ENCODE measurements at regions of chr17 and their contacts with region 1.

Region 1: GRCh38 chr17:12637015-12637414 is 28.7 kb upstream of the MYOCD start:
- DNase-seq: no peak
- ATAC-seq: peak in 3 of 4 donors; percentile 52 to 75 (median 52)
- H3K4me3 ChIP-seq: no peak overlapping the region
- H3K27ac ChIP-seq: peak overlapping the region in 3 of 12 donors; percentile 21 to 66 (median 52)
- H3K4me1 ChIP-seq: peaks cover 0 to 25% (median 2%) of the 10 kb centered on the region in 12 donors
- H3K27me3 ChIP-seq: peaks cover 0 to 5% (median 0%) of the 10 kb centered on the region in 9 donors
- CTCF ChIP-seq: no peak
- POLR2A ChIP-seq: no peak

Region 2: GRCh38 chr17:12580640-12581039 is 56.4 kb before region 1 on chr17:
- intact Hi-C with region 1: no loop called
- DNase-seq: no peak
- ATAC-seq: peak in 3 of 4 donors; percentile 43 to 59 (median 47)
- H3K4me3 ChIP-seq: peak overlapping the region in 3 of 12 donors; percentile 2 to 10 (median 3)
- H3K27ac ChIP-seq: peak overlapping the region in 7 of 12 donors; percentile 6 to 63 (median 41)
- H3K4me1 ChIP-seq: peaks cover 0 to 22% (median 7%) of the 10 kb centered on the region in 12 donors
- H3K27me3 ChIP-seq: no peaks in the 10 kb centered on the region
- CTCF ChIP-seq: no peak
- POLR2A ChIP-seq: no peak

Region 3: GRCh38 chr17:12599186-12599920 is 37.7 kb before region 1 on chr17:
- intact Hi-C with region 1: loop called in 1 of 10 experiments (anchors 5 kb)
- DNase-seq: no peak
- ATAC-seq: no peak
- H3K4me3 ChIP-seq: no peak overlapping the region
- H3K27ac ChIP-seq: no peak overlapping the region
- H3K4me1 ChIP-seq: no peaks in the 10 kb centered on the region
- H3K27me3 ChIP-seq: no peaks in the 10 kb centered on the region
- CTCF ChIP-seq: no peak
- POLR2A ChIP-seq: no peak

Region 4: DNA sequence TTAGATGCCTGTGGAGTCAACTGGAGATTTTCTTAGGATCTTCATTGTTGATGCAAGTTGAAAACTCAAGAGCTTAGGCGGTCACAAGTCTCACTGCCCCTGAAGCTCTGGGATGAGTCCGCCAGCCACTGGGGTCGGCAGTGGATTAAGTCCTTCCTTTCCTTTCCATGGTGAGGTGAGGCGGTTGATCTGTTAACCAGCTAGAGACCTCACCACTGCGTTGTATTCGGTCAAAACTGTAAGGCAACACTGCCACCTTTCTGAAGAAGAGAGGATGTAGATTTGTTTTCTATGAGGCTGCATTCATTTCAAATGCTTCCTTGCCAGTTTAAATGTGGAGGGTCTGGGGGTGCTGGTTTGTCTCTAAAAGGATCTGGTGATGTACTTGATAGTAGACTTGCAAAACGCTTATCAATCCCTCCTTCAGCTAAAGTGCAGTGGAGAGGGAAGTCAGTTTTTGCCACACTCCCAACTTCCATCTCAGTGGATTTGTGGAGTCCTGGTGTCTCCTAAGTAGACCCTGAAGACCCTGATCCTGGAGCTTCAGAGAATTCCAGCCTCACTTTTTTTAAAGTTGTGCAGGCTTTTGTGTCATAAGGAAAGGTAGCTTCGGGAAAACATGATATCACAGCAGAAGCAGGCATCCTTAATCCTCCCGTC is 30.4 kb after region 1 on chr17:
- intact Hi-C with region 1: no loop called
- DNase-seq: peak in 4 of 5 donors; percentile 34 to 56 (median 48)
- ATAC-seq: peak; percentile 62 to 81 (median 72)
- H3K4me3 ChIP-seq: peak overlapping the region; percentile 47 to 81 (median 64)
- H3K27ac ChIP-seq: peak overlapping the region; percentile 51 to 91 (median 80)
- H3K4me1 ChIP-seq: peaks cover 0 to 33% (median 5%) of the 10 kb centered on the region in 12 donors
- H3K27me3 ChIP-seq: peaks cover 0 to 37% (median 5%) of the 10 kb centered on the region in 9 donors
- CTCF ChIP-seq: peak in 11 of 12 donors; percentile 7 to 64 (median 45)
- POLR2A ChIP-seq: peak in 1 of 2 donors; percentile 7

Region 5: GRCh38 chr17:12887088-12887487 is 250.1 kb after region 1 on chr17:
- intact Hi-C with region 1: no loop called
- DNase-seq: no peak
- ATAC-seq: no peak
- H3K4me3 ChIP-seq: no peak overlapping the region
- H3K27ac ChIP-seq: no peak overlapping the region
- H3K4me1 ChIP-seq: no peaks in the 10 kb centered on the region
- H3K27me3 ChIP-seq: no peaks in the 10 kb centered on the region
- CTCF ChIP-seq: no peak
- POLR2A ChIP-seq: no peak